Mammary epithelial cell (primary cell): ENCODE measurements at regions of chr7 and their contacts with region 1.

Region 1: GRCh38 chr7:128459394-128459878 is 3.8 kb downstream of the HILPDA start:
- DNase-seq: peak; percentile 52
- H3K4me3 ChIP-seq: no peak overlapping the region
- H3K27ac ChIP-seq: no peak overlapping the region
- H3K4me1 ChIP-seq: peaks cover 20% of the 10 kb centered on the region
- H3K27me3 ChIP-seq: no peaks in the 10 kb centered on the region
- CTCF ChIP-seq: peak; percentile 61 to 76

Region 2: DNA sequence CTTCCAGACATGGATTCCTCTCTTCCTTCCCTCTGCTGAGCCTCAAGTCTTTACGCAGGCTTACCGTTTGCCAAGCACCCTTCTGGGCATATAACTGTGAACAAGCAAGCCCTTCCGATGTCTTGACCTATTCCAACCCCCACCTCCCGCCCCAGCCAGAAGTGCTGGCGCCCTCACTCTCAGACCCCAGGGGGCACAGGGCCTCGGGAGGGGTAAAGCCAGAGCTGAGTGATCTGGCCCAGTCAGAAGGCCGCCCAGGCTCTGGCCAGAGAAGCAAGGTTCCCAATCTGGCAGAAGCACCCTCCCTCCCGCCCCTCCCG is 99.1 kb before region 1 on chr7:
- CTCF ChIA-PET with region 1: no interaction called
- dilution Hi-C with region 1: no loop called
- in situ Hi-C with region 1: no loop called
- intact Hi-C with region 1: no loop called
- DNase-seq: no peak
- H3K4me3 ChIP-seq: no peak overlapping the region
- H3K27ac ChIP-seq: no peak overlapping the region
- H3K4me1 ChIP-seq: peaks cover 22% of the 10 kb centered on the region
- H3K27me3 ChIP-seq: peaks cover 4% of the 10 kb centered on the region
- CTCF ChIP-seq: no peak

Region 3: GRCh38 chr7:128409596-128410160 is 49.8 kb before region 1 on chr7 and contains the start of gene IMPDH1:
- CTCF ChIA-PET with region 1: interaction called, 8 read pairs
- dilution Hi-C with region 1: no loop called
- in situ Hi-C with region 1: no loop called
- intact Hi-C with region 1: loop called (anchors 2 kb)
- DNase-seq: peak; percentile 80
- H3K4me3 ChIP-seq: peak within 1 kb of the TSS; percentile 67 to 77 (median 68)
- H3K27ac ChIP-seq: peak within 1 kb of the TSS; percentile 35
- H3K4me1 ChIP-seq: peaks cover 22% of the 10 kb centered on the region
- H3K27me3 ChIP-seq: no peaks in the 10 kb centered on the region
- CTCF ChIP-seq: no peak
- total RNA-seq, gene IMPDH1: 50.5 to 92.3 TPM

Region 4: GRCh38 chr7:128425850-128426249 is 33.6 kb before region 1 on chr7:
- CTCF ChIA-PET with region 1: interaction called, 15 read pairs
- dilution Hi-C with region 1: no loop called
- in situ Hi-C with region 1: loop called in 1 of 2 experiments (anchors 5 kb)
- intact Hi-C with region 1: loop called (anchors 1 kb)
- DNase-seq: peak; percentile 32
- H3K4me3 ChIP-seq: no peak overlapping the region
- H3K27ac ChIP-seq: no peak overlapping the region
- H3K4me1 ChIP-seq: peaks cover 3% of the 10 kb centered on the region
- H3K27me3 ChIP-seq: no peaks in the 10 kb centered on the region
- CTCF ChIP-seq: peak; percentile 92 to 98

Region 5: DNA sequence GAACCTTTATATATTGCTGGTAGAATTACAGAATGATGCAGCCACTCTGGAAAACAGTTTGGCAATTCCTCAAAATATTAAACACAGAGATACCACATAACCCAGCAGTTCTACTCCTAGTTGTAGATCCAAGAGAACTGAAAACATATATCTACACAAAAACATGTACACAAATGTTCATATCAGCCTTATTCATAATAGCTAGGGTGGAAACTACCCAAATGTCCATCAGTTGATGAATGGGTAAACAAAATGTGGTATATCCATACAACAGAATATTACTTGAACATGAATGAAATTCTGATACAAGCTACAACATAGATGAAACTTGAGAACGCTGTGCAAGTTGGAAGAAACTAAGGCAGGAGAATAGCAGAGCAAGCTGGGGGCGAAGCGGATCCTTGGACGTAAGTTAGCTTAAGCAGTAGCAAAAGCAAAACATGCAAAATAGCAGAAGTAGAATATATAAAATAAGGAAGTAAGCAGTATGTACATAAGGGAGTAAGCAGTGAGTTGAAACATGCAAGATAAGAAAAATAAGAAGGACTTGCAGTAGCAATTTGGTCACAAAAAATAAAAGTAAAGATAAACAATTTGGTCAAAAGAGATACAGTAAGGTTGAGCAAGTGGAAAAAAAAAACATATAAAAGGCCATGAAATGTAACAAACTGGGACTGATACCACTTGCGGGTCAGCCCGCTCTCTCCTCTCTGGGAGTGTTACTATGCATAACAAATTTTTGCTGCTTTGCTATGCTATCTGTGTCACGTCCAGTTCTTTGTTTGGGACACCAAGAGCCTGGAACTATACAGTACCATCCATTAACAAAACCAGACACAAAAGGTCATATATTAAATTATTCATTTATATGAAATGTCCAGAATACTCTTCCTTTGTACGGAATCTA is 21.8 kb before region 1 on chr7:
- CTCF ChIA-PET with region 1: no interaction called
- dilution Hi-C with region 1: no loop called
- in situ Hi-C with region 1: no loop called
- intact Hi-C with region 1: no loop called
- DNase-seq: no peak
- H3K4me3 ChIP-seq: no peak overlapping the region
- H3K27ac ChIP-seq: no peak overlapping the region
- H3K4me1 ChIP-seq: no peaks in the 10 kb centered on the region
- H3K27me3 ChIP-seq: no peaks in the 10 kb centered on the region
- CTCF ChIP-seq: no peak